ENCODE measurements at regions of chr19 and their contacts with region 1.

Region 1: GRCh38 chr19:11987405-11988281 is 22.8 kb downstream of the ZNF763 start:
- DNase-seq: peak; percentile 97
- H3K4me3 ChIP-seq: peak overlapping the region; percentile 56 to 97 (median 86)
- H3K27ac ChIP-seq: peak overlapping the region; percentile 74 to 93 (median 90)
- H3K4me1 ChIP-seq: peaks cover 0 to 51% (median 21%) of the 10 kb centered on the region in 6 donors
- H3K27me3 ChIP-seq: no peaks in the 10 kb centered on the region
- CTCF ChIP-seq: peak in 5 of 11 experiments; percentile 9 to 46 (median 13)
- POLR2A ChIP-seq: peak in 1 of 3 donors; percentile 66

Region 2: GRCh38 chr19:11798391-11799330 is 189.0 kb before region 1 on chr19 and contains the start of gene ZNF491:
- intact Hi-C with region 1: loop called (anchors 5 kb)
- DNase-seq: peak; percentile 97
- H3K4me3 ChIP-seq: peak within 1 kb of the TSS; percentile 56 to 79 (median 70)
- H3K27ac ChIP-seq: peak within 1 kb of the TSS; percentile 49 to 86 (median 80)
- H3K4me1 ChIP-seq: peaks cover 9 to 30% (median 21%) of the 10 kb centered on the region in 6 donors
- H3K27me3 ChIP-seq: no peaks in the 10 kb centered on the region
- CTCF ChIP-seq: peak in 3 of 11 experiments; percentile 25 to 42 (median 30)
- POLR2A ChIP-seq: peak in 2 of 3 donors; percentile 26 to 67
- total RNA-seq, gene ZNF491: 1.2 to 3.5 (median 2.6) TPM

Region 3: DNA sequence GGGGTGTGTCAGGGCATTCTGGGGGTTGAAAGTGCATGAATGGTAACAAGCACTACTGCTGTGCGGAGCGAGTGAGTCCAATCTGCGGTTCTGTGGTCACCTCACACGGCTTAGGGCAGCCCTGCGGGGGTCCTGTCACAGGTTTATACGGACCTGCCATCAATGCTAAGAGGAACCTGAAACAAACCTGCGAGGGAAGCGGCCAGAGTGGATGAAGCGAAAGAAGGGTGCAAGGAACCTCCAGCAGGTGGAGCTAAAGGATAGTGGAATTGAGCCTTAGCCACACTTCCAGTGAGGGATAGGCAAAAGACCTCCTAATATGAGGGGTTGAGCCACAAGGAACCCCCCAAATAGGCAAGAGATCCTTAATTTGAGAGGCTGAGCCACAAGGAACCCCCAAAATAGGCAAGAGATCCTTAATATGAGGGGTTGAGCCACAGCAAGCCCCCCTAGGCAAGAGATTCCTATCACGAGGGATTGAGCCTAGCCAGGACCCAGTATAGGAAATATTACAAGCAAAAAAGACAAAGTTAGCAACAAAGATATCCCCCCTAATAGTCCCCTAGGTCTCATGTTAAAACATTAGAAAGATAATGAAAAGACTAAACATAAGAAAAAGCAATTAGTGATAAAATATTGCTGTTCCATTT is 106.4 kb before region 1 on chr19:
- intact Hi-C with region 1: loop called (anchors 2 kb)
- DNase-seq: peak; percentile 75
- H3K4me3 ChIP-seq: peak overlapping the region in 1 of 8 donors; percentile 21
- H3K27ac ChIP-seq: no peak overlapping the region
- H3K4me1 ChIP-seq: peaks cover 0 to 5% (median 2%) of the 10 kb centered on the region in 6 donors
- H3K27me3 ChIP-seq: no peaks in the 10 kb centered on the region
- CTCF ChIP-seq: peak; percentile 41 to 82 (median 74)
- POLR2A ChIP-seq: no peak

Region 4: DNA sequence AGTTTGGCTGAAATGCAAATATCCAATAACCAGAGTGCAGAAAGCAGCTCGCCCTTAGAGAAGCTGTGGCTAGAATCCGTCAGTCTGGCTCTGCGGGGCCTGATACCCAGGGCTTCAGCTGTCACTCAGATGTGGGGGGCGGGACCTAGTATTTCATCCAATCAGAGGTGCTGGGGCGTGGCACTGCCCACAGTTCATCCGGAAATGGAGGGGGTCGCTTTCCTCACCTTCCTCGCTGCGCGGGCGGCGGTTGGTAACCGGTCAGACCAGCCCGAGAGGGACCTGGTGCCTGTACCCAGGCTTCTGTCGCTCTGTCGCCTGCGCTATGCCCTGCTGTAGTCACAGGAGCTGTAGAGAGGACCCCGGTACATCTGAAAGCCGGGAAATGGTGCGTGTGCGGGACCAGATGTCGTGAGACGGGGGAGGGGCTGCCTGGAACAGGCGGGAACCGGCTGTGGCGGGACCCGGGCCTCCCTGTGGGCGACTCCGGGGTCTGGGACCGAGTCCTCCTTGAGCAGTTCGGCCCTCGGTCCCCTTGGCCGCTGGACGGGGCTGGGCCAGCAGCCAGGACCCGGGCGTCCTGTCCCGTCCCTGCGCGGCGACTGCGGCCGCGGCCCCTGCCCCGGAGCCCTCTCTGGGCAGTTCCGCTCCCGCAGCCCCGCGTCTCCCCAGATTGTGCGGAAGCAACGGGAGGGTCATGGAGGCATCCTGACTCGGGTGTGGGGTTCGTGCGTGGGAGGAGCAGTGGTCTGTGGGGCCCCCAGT is 62.6 kb before region 1 on chr19 and contains the start of gene ZNF700:
- intact Hi-C with region 1: loop called (anchors 5 kb)
- DNase-seq: peak; percentile 96
- H3K4me3 ChIP-seq: peak within 1 kb of the TSS; percentile 68 to 96 (median 84)
- H3K27ac ChIP-seq: peak within 1 kb of the TSS; percentile 93 to 99 (median 97)
- H3K4me1 ChIP-seq: peaks cover 5 to 59% (median 34%) of the 10 kb centered on the region in 6 donors
- H3K27me3 ChIP-seq: no peaks in the 10 kb centered on the region
- CTCF ChIP-seq: peak in 1 of 11 experiments; percentile 20
- POLR2A ChIP-seq: peak in 1 of 3 donors; percentile 52
- total RNA-seq, gene ZNF700: 20.1 to 34.0 (median 25.5) TPM

Region 5: DNA sequence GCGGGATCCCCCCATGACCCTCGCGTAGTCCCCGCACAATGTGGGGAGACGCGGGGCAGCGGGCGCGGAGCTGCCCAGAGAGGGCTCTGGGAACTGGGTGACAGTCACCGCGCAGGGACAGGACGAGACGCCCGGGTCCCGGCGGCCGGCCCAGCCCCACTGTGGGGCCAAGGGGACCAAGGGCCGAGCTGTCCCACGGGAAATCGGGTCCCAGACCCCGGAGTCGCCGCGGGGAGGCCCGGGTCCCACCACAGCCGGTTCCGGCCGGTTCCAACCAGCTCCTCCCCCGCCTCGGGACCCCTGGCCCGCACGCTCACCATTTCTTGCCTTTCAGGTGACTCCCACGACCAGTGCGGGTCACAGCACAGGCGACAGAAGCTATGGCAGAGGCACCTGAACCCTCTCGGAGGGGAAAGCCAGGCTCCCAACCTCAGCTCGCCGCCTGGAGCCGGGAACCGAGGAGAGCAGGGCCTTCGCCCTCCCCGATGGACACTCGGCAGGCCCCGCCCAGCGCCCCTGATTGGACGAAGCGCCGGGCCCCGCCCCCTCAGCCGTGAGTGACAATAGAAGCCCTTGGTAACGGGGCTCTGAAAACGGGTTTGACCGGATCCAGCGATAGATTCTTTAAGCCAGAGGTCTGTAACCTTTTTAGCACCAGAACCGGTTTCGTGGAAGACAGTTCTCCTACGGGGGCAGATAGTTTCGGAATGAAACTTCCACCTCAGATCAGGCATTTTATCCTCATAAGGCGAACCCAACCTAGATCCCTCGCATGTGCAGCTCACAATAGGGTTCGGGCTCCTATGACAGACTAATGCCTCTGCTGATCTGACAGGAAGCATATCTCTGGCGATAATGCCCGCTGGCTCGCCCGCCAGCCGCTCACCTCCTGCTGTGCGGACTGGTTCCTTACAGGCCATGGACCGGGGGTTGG is 47.8 kb after region 1 on chr19 and contains the start of gene ZNF433:
- intact Hi-C with region 1: no loop called
- DNase-seq: peak; percentile 94
- H3K4me3 ChIP-seq: peak within 1 kb of the TSS; percentile 55 to 86 (median 70)
- H3K27ac ChIP-seq: peak within 1 kb of the TSS; percentile 67 to 88 (median 83)
- H3K4me1 ChIP-seq: peaks cover 0 to 32% (median 22%) of the 10 kb centered on the region in 6 donors
- H3K27me3 ChIP-seq: peaks cover 0 to 10% (median 0%) of the 10 kb centered on the region in 7 donors
- CTCF ChIP-seq: peak in 1 of 11 experiments; percentile 9
- POLR2A ChIP-seq: peak in 1 of 3 donors; percentile 8
- total RNA-seq, gene ZNF433: 3.4 to 7.7 (median 6.4) TPM